H1 (cell line): ENCODE measurements at regions of chr3 and their contacts with region 1.

Region 1: DNA sequence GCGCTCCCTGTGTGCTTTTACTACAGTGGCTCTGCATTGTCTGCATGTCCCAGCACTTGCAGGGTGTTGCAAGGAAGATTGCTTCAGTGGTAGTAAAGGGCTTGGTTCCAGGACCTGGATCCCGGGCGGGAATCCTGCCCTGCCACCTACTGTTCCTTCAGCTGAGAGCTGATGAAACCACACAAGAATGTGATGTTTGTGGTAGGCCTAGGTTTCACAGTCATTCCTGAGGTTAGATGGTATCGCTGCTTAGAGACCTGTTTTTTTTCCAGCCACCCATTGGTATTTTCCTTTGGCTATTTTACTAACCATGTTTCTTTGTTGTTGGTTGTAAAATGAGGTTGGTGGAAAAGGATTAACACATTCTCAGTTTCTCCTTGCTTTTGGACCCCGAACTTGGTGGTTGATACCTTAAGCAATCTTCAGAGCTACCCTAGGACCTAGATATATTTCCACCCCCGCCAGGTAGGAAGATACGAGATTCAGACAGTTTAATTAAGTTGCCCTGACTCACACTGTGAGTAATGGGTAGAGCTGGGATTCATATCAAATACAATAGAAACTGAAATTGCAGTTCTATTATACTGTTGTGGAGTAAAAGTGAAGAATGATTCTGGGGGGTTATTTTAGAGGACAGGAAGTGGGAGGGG is 11.4 kb downstream of the GPR87 start:
- DNase-seq: peak; percentile 63 to 78
- H3K4me3 ChIP-seq: peak overlapping the region in 1 of 4 experiments; percentile 11; a peak in 1 of 8 replicates
- H3K27ac ChIP-seq: 0 out of 2 replicates have a peak overlapping the region, but pooled peaks have one; percentile 11
- H3K4me1 ChIP-seq: peaks cover 7 to 28% (median 16%) of the 10 kb centered on the region in 4 experiments
- H3K27me3 ChIP-seq: 0 out of 7 replicates have a peak, but pooled peaks cover 0 to 3% (median 0%) of the 10 kb centered on the region in 4 experiments
- CTCF ChIP-seq: peak in 2 of 3 experiments; percentile 29 to 35; a peak in 2 of 4 replicates
- EP300 ChIP-seq: peak in 1 of 2 experiments; percentile 53; a peak in 1 of 3 replicates
- POLR2A ChIP-seq: no peak
- RAD21 ChIP-seq: peak; percentile 32 to 41; a peak in 3 of 4 replicates

Region 2: GRCh38 chr3:151290673-151291072 is 14.6 kb before region 1 on chr3:
- CTCF ChIA-PET with region 1: interaction called, 14 read pairs
- POLR2A ChIA-PET with region 1: interaction called, 3 read pairs
- DNase-seq: no peak
- H3K4me3 ChIP-seq: no peak overlapping the region
- H3K27ac ChIP-seq: no peak overlapping the region
- H3K4me1 ChIP-seq: no peaks in the 10 kb centered on the region; a peak in 1 of 7 replicates
- H3K27me3 ChIP-seq: no peaks in the 10 kb centered on the region
- CTCF ChIP-seq: peak in 2 of 3 experiments; percentile 12 to 17; a peak in 2 of 4 replicates
- EP300 ChIP-seq: no peak
- POLR2A ChIP-seq: no peak
- RAD21 ChIP-seq: peak; percentile 62 to 70

Region 3: GRCh38 chr3:151327571-151328198 is 22.5 kb after region 1 on chr3:
- CTCF ChIA-PET with region 1: interaction called, 11 read pairs
- POLR2A ChIA-PET with region 1: no interaction called
- DNase-seq: no peak
- H3K4me3 ChIP-seq: no peak overlapping the region
- H3K27ac ChIP-seq: no peak overlapping the region
- H3K4me1 ChIP-seq: no peaks in the 10 kb centered on the region; a peak in 2 of 7 replicates
- H3K27me3 ChIP-seq: no peaks in the 10 kb centered on the region
- CTCF ChIP-seq: no peak; a peak in 1 of 4 replicates
- EP300 ChIP-seq: no peak
- POLR2A ChIP-seq: no peak
- RAD21 ChIP-seq: peak in 1 of 2 experiments; percentile 6; a peak in 1 of 4 replicates